Heart left ventricle (tissue), 16 donors: ENCODE measurements at regions of chr12 and their contacts with region 1.

Region 1: DNA sequence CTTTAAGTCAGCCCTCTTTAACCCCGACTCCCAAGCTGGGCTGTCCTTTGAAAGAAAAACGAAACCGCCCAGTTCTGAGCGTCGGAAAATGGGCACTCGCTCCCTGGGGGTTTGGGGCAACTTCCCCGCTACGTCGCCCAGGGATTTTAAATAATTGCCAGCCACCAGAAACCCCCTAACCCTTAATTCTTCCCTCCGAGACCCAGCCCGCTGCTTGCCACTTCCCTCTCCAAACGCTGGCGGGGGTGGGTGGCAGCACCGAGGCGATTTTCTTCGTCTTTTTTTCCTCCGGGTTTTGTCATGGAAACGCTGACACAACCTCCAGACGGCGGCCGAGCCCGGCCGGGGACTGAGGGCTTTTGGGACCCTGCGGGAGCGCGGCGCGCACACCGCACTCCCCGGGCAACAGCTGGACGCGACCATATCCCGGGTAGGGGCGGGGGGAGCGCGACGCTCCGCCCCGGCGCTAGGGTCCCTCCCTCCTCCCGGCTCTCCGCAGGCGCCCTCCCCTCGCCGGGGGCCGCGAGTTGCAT is at the start of gene CHST11:
- DNase-seq: peak; percentile 84 to 94 (median 89)
- ATAC-seq: peak; percentile 87 to 96 (median 96)
- H3K4me3 ChIP-seq: peak within 1 kb of the TSS; percentile 69 to 99 (median 84)
- H3K27ac ChIP-seq: peak within 1 kb of the TSS; percentile 22 to 88 (median 76)
- H3K4me1 ChIP-seq: peaks cover 0 to 38% (median 17%) of the 10 kb centered on the region in 12 donors
- H3K27me3 ChIP-seq: no peaks in the 10 kb centered on the region
- CTCF ChIP-seq: peak in 10 of 12 donors; percentile 12 to 58 (median 31)
- POLR2A ChIP-seq: peak in 1 of 2 donors; percentile 42
- total RNA-seq, gene CHST11: 2.3 to 16.9 (median 4.4) TPM

Region 2: GRCh38 chr12:104505095-104505818 is 48.8 kb after region 1 on chr12:
- intact Hi-C with region 1: no loop called
- DNase-seq: no peak
- ATAC-seq: no peak
- H3K4me3 ChIP-seq: no peak overlapping the region
- H3K27ac ChIP-seq: peak overlapping the region in 1 of 12 donors; percentile 1
- H3K4me1 ChIP-seq: peaks cover 0 to 67% (median 16%) of the 10 kb centered on the region in 12 donors
- H3K27me3 ChIP-seq: no peaks in the 10 kb centered on the region
- CTCF ChIP-seq: no peak
- POLR2A ChIP-seq: no peak

Region 3: DNA sequence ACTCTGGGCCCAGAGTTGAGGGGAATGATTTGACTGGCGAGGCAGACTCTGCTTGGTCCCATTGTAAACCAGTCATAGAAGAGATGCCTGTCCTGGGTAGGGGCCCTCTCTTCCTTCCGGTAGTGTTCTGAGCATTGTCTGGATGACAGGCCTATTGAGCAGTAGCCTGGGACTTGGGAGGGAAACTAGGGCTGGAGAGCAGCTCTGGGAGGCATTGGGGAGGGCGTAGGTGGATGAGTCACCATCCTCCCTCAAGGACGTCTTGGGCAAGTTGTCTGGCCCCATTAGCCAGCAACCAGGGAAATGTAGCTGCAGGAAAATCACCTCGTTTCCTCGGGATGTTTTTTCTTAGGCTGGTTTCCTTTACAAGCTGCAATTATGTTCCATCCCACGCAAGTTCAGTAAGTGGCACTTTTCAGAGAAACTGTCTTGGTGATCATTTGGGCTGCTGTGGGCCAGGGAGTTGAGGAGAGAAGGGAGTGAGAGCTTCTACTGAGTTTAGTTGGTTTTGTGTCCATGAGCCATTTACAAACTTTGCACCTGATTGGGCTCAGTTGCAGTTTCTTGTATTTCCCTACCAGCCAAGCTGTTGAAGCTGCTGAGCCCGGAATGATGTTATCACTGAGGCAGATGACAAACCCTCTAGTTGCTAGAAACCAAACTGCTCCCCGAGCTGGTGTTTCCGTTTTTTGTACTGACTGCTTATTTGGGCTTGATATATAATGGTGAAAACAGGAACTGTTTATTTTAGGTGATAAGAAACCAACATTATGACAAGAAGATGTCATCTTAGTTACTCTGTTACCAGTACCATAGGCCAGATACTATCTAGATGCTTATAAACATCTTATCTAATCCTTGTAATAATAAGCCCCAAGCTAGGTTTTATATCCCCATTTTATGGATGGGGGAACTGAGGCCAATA is 147.8 kb after region 1 on chr12:
- intact Hi-C with region 1: loop called in 4 of 10 experiments (anchors 10 kb)
- DNase-seq: peak; percentile 61 to 91 (median 71)
- ATAC-seq: peak; percentile 70 to 97 (median 96)
- H3K4me3 ChIP-seq: peak overlapping the region in 1 of 12 donors; percentile 16
- H3K27ac ChIP-seq: peak overlapping the region in 11 of 12 donors; percentile 26 to 91 (median 63)
- H3K4me1 ChIP-seq: peaks cover 0 to 89% (median 17%) of the 10 kb centered on the region in 12 donors
- H3K27me3 ChIP-seq: no peaks in the 10 kb centered on the region
- CTCF ChIP-seq: no peak
- POLR2A ChIP-seq: no peak

Region 4: DNA sequence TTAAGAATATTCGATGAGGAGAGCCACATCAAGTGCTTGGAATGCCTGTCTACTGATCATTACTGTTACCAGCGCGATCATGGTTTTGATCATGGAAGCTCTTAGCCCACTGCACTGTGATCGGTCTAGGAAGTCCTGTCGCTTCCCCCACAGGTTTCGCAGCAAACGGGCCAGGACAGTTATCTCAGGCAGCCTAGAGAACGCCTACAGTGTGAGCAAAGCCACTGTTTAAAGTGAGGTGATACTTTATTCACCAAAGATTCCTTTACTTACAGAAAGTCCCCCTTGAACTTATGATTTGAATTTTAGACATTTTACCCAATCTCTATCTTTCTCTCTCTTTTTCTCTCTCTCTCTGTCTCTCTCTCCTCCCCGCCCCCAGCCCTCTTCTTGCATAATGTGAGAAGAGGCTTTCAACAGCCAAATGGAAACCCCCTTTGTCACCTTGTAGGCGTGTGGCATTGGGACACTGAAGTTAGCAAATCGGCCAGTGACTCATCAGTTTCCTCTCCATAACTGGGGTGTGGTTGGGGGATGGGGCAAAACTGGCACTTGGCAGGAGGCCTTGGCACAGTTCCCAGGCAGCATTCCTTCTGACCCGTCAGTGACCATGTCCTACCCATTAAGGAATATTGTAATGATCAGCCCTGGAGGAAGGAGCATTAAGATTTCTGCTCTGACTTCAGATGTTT is 215.1 kb after region 1 on chr12:
- intact Hi-C with region 1: loop called in 5 of 10 experiments (anchors 2 to 5 kb)
- DNase-seq: peak; percentile 82 to 91 (median 83)
- ATAC-seq: peak; percentile 22 to 72 (median 58)
- H3K4me3 ChIP-seq: peak overlapping the region in 1 of 12 donors; percentile 4
- H3K27ac ChIP-seq: peak overlapping the region in 11 of 12 donors; percentile 42 to 89 (median 71)
- H3K4me1 ChIP-seq: peaks cover 3 to 81% (median 57%) of the 10 kb centered on the region in 12 donors
- H3K27me3 ChIP-seq: no peaks in the 10 kb centered on the region
- CTCF ChIP-seq: no peak
- POLR2A ChIP-seq: no peak

Region 5: DNA sequence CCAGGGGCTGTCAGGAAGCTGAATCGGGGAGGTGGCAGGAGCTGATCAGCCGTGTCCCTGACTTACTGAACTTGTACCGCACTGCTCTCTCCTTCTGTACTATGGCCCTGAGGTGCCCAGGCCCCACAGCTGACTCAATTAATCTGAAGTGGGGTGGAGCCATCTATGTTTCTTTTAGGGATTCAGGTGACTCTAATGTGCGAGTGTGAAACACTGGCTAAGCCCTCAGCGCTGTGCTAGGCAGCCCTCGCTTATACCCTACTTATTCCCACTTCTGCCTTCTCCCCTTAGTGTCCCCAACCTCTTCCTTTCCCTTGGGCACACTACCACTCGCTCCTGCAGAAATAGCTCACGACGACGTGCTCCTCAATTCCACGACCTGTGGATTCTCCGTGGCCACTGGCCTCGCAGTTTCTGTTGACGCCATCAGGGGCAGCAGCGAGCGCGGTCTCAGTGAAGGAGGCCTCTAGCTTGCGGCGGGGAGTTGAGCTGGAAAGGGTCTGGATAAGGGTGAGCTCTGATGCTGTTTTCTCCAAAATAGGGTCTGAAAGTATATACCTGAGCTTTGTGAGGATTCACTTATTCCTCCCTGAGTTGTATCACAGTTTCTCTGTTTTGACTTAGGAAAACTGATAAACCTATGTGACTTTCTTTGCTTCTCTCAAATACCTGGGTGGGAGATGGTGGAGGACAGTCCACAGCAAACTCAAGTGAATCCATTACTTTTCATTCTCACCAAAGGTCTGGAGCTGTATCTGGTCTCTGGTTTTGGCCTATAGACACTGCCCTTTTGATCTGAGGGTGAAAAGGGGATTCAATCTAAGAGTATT is 334.0 kb after region 1 on chr12:
- intact Hi-C with region 1: loop called in 1 of 10 experiments (anchors 5 kb)
- DNase-seq: peak in 4 of 5 donors; percentile 28 to 78 (median 54)
- ATAC-seq: peak in 3 of 4 donors; percentile 52 to 70 (median 53)
- H3K4me3 ChIP-seq: no peak overlapping the region
- H3K27ac ChIP-seq: no peak overlapping the region
- H3K4me1 ChIP-seq: peaks cover 0 to 23% (median 5%) of the 10 kb centered on the region in 12 donors
- H3K27me3 ChIP-seq: no peaks in the 10 kb centered on the region
- CTCF ChIP-seq: peak; percentile 43 to 76 (median 64)
- POLR2A ChIP-seq: no peak

Region 6: DNA sequence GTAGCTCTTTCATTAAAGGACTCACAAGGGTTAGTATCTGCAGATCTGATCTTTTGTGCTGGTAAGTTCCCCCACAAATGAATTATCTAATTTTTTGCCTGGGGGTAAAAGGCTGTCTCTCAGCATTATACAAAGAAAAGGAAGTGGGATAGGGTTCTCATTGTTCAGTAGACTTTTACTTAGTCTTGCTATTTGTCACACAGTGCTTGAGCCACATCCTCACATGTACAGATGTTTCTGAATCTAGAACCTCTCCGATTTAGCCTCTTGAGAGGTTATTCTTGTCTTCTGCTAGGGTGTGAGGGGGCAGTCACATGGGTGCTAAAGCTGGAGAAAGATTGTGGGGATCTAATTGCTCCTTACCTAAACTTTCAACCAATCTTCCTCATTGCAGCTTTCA is 408.6 kb after region 1 on chr12:
- intact Hi-C with region 1: loop called in 1 of 10 experiments (anchors 10 kb)
- DNase-seq: no peak
- ATAC-seq: no peak
- H3K4me3 ChIP-seq: no peak overlapping the region
- H3K27ac ChIP-seq: no peak overlapping the region
- H3K4me1 ChIP-seq: peaks cover 0 to 26% (median 7%) of the 10 kb centered on the region in 12 donors
- H3K27me3 ChIP-seq: no peaks in the 10 kb centered on the region
- CTCF ChIP-seq: no peak
- POLR2A ChIP-seq: no peak

Region 7: GRCh38 chr12:104877123-104877705 is 420.7 kb after region 1 on chr12:
- intact Hi-C with region 1: loop called in 1 of 10 experiments (anchors 5 kb)
- DNase-seq: peak in 3 of 5 donors; percentile 27 to 55 (median 33)
- ATAC-seq: peak in 3 of 4 donors; percentile 67 to 77 (median 76)
- H3K4me3 ChIP-seq: no peak overlapping the region
- H3K27ac ChIP-seq: no peak overlapping the region
- H3K4me1 ChIP-seq: peaks cover 0 to 3% (median 0%) of the 10 kb centered on the region in 12 donors
- H3K27me3 ChIP-seq: no peaks in the 10 kb centered on the region
- CTCF ChIP-seq: peak; percentile 37 to 85 (median 76)
- POLR2A ChIP-seq: no peak